CD8-positive, alpha-beta memory T cell (primary cell): ENCODE measurements at regions of chr9 and their contacts with region 1.

Region 1: DNA sequence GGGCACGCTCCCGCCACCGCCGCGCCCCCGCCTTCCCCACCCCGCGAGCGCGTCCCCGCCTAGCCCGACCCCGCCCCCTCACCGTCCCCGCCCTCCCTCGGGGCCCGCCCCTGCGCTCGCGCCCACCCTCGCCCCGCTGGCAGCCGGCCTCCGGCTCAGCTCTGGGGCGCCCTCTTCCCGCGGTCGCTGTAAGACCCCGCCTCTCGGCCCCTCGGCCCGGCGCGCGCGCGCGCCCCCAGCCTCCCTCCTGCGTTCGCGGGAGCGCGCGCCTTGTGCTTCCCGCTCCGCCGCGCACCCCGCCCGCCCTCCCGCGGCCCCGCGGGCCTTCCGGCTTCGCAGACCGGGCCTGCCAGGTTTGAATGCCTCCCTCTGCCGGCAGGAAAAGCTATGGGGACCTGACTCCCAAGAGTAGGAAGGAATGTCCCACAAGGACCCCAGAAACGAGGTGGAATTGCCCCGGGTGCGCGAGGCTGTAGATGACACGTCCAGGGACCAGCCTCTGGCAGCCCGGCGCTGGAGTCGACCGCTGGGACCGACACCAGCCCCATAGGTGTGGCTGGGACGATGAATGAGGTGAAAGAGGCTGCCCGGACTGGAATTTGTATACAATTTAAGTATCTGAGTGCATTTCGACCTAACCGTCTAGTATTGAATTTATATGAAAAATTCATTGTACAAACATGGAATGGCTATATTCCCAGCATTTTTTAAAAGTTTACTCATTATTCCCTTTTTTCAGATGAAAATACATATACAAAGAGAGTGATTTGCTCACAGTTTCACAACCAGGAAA is 416 bp upstream of the PTBP3 start:
- DNase-seq: peak; percentile 86 to 95 (median 91)
- H3K4me3 ChIP-seq: peak overlapping the region; percentile 79
- H3K4me3 Mint-ChIP-seq: peak overlapping the region; percentile 86 to 98 (median 96)
- H3K27ac ChIP-seq: peak overlapping the region; percentile 88
- H3K27ac Mint-ChIP-seq: peak overlapping the region; percentile 85 to 98 (median 94)
- H3K4me1 ChIP-seq: peaks cover 25% of the 10 kb centered on the region
- H3K4me1 Mint-ChIP-seq: peaks cover 35 to 42% (median 37%) of the 10 kb centered on the region in 3 donors
- H3K27me3 ChIP-seq: no peaks in the 10 kb centered on the region
- H3K27me3 Mint-ChIP-seq: peaks cover 0 to 4% of the 10 kb centered on the region in 2 donors

Region 2: DNA sequence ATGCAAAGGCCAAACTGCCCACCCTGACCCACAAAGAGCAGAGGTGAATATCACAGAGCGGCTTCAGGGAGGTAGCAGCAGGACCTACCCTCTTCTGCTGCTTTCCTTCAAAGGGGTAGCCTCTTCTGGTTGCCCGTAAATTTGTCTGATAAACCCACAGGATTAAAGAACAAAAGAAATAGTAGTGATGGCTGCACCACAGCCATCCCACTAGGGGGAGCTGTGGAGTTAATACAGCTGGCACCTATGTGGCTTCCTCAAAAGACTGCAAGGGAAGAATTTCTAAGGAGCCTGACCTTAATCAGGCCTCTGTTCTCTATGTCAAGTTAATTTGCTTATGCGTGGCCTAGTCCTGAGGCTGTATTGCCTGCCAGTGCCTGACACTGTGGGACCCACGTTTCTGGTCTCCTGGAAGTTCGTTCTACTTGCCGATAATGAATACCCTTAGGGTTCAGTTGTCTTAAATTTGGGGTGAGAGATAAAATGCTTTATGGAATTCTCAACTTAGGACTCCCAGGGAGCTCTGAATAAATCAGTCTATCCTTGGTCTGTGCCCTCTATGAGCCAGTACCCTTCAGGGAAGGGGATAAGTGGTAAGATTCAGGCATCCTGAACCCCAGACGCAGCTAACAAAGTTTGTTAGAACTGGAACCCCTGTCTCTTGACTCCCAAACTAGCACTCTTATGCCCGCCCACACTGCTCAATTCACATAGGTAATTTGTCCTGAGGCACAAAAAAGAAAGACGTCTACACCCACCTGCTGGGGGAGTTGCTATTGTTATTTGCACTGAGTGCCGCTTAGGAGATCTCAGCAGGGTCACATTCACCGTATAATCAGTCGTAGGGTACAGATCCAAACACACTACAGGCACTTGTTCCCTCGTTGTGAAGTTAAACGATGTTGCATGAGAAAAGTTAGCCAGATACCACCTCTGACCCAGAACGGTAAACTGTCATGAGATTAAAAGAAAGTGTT is 235.8 kb before region 1 on chr9:
- CTCF ChIA-PET with region 1: interaction called, 14 read pairs
- POLR2A ChIA-PET with region 1: interaction called, 3 read pairs
- DNase-seq: peak; percentile 49 to 74 (median 59)
- H3K4me3 ChIP-seq: no peak overlapping the region
- H3K4me3 Mint-ChIP-seq: no peak overlapping the region
- H3K27ac ChIP-seq: no peak overlapping the region
- H3K27ac Mint-ChIP-seq: peak overlapping the region in 4 of 8 donors; percentile 13 to 67 (median 50)
- H3K4me1 ChIP-seq: peaks cover 9% of the 10 kb centered on the region
- H3K4me1 Mint-ChIP-seq: peaks cover 19 to 34% (median 20%) of the 10 kb centered on the region in 3 donors
- H3K27me3 ChIP-seq: no peaks in the 10 kb centered on the region
- H3K27me3 Mint-ChIP-seq: no peaks in the 10 kb centered on the region

Region 3: GRCh38 chr9:112174218-112174964 is 159.4 kb before region 1 on chr9:
- CTCF ChIA-PET with region 1: interaction called, 8 read pairs
- POLR2A ChIA-PET with region 1: interaction called, 33 read pairs
- DNase-seq: peak; percentile 57 to 84 (median 68)
- H3K4me3 ChIP-seq: peak overlapping the region; percentile 81
- H3K4me3 Mint-ChIP-seq: peak overlapping the region; percentile 87 to 95 (median 91)
- H3K27ac ChIP-seq: peak overlapping the region; percentile 55
- H3K27ac Mint-ChIP-seq: peak overlapping the region; percentile 77 to 97 (median 92)
- H3K4me1 ChIP-seq: peaks cover 58% of the 10 kb centered on the region
- H3K4me1 Mint-ChIP-seq: peaks cover 70 to 89% (median 85%) of the 10 kb centered on the region in 3 donors
- H3K27me3 ChIP-seq: no peaks in the 10 kb centered on the region
- H3K27me3 Mint-ChIP-seq: peaks cover 0 to 2% of the 10 kb centered on the region in 2 donors

Region 4: DNA sequence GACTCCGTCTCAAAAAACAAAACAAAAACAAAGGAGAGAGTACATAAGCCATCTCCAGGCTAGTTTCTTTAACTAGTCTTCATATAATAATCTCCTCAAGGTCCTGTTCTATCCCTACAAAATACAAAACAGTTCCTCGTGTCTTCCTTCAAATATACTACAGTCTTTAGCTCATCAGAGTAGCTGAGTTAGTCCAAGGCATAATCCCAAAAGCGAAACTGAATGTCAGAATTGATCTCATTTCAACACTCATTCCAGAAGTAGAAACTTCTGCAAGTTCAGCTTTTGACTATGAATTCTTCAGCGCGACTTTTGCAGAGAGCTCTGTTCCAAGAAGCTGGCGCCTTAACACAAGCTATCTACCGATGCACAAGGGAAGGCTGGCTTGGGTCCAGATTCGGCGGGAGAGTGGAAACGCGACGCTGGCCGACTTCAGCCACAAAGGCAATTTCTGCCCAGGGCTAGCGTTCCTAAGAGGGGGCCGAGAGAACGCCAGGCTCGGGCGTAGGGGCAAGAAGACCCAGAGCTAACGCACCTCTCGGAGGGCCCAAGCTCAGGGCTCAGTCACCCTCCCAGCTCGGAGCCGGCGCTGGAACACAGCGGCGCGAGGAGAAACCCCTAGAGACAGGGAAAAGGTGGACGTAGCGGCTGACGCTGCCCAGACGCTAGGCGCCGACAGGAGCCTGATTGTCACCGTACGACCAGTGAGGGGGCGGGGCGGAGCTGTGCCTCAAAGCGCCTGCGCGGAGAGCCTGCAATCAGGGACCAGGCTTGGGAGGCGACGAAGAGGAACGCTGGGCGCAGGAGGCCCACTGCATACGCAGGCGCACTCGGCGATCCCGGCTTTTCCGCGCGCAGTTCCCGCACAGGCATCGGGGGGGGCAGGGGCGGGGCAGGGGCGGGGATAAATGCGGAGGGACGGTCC is 45.6 kb after region 1 on chr9:
- CTCF ChIA-PET with region 1: no interaction called
- POLR2A ChIA-PET with region 1: interaction called, 18 read pairs
- DNase-seq: peak; percentile 93 to 99 (median 97)
- H3K4me3 ChIP-seq: peak overlapping the region; percentile 88
- H3K4me3 Mint-ChIP-seq: peak overlapping the region; percentile 97 to 99 (median 99)
- H3K27ac ChIP-seq: peak overlapping the region; percentile 87
- H3K27ac Mint-ChIP-seq: peak overlapping the region; percentile 92 to 99 (median 98)
- H3K4me1 ChIP-seq: peaks cover 20% of the 10 kb centered on the region
- H3K4me1 Mint-ChIP-seq: peaks cover 35 to 64% (median 49%) of the 10 kb centered on the region in 3 donors
- H3K27me3 ChIP-seq: no peaks in the 10 kb centered on the region
- H3K27me3 Mint-ChIP-seq: no peaks in the 10 kb centered on the region